Panc1 (cell line): ENCODE measurements at regions of chr15 and their contacts with region 1.

Region 1: GRCh38 chr15:78369161-78369560 is 29.0 kb downstream of the CRABP1 start:
- DNase-seq: no peak
- ATAC-seq: no peak
- H3K4me3 ChIP-seq: no peak overlapping the region
- H3K27ac ChIP-seq: no peak overlapping the region
- H3K4me1 ChIP-seq: no peaks in the 10 kb centered on the region
- H3K27me3 ChIP-seq: peaks cover 2% of the 10 kb centered on the region; the same call in 1 of the 2 replicates
- CTCF ChIP-seq: no peak

Region 2: DNA sequence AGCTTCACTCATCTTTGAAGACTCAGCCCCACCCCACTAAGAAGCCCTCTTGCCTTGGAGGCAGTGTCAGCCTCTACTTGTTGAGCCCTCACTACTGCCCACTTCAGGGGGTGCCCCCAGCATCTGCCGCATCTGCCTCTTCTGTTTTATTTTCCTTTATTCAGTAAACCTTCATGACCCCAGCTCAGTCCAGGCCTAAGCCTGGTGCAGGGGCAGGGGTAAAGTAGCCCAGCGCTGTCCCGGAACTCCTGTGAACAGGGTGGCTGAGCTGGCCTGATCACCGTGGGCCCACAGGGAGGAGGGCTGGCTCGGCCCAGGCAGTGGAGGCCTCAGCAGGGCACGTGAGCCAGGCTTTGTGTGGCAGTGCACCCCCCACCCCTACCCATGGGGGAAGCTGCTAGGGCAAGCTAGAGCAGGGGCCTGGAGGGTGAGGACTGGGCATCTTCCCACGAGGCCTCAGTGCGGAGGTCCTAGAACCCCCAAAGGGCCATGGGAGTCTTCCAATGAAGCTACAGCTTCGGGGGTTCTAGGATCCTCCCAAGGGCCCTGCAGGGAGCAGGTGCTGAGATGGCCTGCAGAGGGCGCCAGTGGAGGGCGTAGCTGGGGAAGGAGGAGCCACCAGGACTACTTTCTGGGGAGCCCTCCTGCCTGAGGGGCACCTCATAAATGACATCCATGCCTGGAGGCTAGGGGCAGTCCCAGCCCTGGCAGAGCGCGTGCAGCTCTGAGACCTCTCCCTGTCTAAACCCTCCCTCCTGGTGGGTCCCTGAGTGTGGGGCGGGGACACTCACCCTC is 1334.3 kb before region 1 on chr15:
- CTCF ChIA-PET with region 1: no interaction called
- POLR2A ChIA-PET with region 1: no interaction called
- in situ Hi-C with region 1: no loop called
- intact Hi-C with region 1: no loop called
- DNase-seq: no peak
- ATAC-seq: no peak
- H3K4me3 ChIP-seq: no peak overlapping the region
- H3K27ac ChIP-seq: no peak overlapping the region
- H3K4me1 ChIP-seq: no peaks in the 10 kb centered on the region; the same call in 1 of the 2 replicates
- H3K27me3 ChIP-seq: no peaks in the 10 kb centered on the region
- CTCF ChIP-seq: peak; percentile 83

Region 3: GRCh38 chr15:77738441-77739302 is 630.5 kb before region 1 on chr15:
- CTCF ChIA-PET with region 1: no interaction called
- POLR2A ChIA-PET with region 1: no interaction called
- in situ Hi-C with region 1: no loop called
- intact Hi-C with region 1: no loop called
- DNase-seq: no peak
- ATAC-seq: no peak
- H3K4me3 ChIP-seq: no peak overlapping the region
- H3K27ac ChIP-seq: no peak overlapping the region
- H3K4me1 ChIP-seq: no peaks in the 10 kb centered on the region
- H3K27me3 ChIP-seq: no peaks in the 10 kb centered on the region; the same call in 1 of the 2 replicates
- CTCF ChIP-seq: no peak

Region 4: GRCh38 chr15:78131295-78132061 is 237.7 kb before region 1 on chr15 and contains the start of gene CIB2:
- CTCF ChIA-PET with region 1: interaction called, 11 read pairs
- POLR2A ChIA-PET with region 1: no interaction called
- in situ Hi-C with region 1: no loop called
- intact Hi-C with region 1: no loop called
- DNase-seq: no peak
- ATAC-seq: peak; percentile 93
- H3K4me3 ChIP-seq: peak within 1 kb of the TSS; percentile 68 to 78
- H3K27ac ChIP-seq: peak within 1 kb of the TSS; percentile 90
- H3K4me1 ChIP-seq: peaks cover 3% of the 10 kb centered on the region; the same call in 1 of the 2 replicates
- H3K27me3 ChIP-seq: no peaks in the 10 kb centered on the region
- CTCF ChIP-seq: peak; percentile 96
- total RNA-seq, gene CIB2: 37.3 TPM

Region 5: DNA sequence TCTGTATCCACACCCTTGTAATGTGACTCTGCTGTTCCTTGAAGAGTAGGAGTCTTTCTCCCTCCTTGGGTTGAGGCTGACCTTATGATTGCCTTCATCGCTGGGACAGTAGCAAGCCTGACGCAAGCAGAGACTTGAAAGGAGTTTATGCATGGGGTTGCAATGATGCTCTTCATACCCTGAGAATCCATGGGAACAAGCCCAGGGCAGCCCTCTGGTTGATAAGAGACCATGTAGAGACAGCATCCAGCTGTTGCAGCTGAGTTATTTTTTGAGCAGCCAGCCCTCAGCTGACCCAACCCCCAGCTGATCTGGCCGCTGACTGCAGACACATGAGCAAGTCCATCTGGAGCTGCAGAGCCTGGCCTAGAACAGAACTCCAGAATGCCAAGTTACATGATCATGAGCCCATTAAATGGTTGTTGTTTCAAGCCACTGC is 1974.4 kb after region 1 on chr15:
- CTCF ChIA-PET with region 1: no interaction called
- POLR2A ChIA-PET with region 1: no interaction called
- in situ Hi-C with region 1: no loop called
- intact Hi-C with region 1: no loop called
- DNase-seq: no peak
- ATAC-seq: no peak
- H3K4me3 ChIP-seq: no peak overlapping the region
- H3K27ac ChIP-seq: no peak overlapping the region
- H3K4me1 ChIP-seq: no peaks in the 10 kb centered on the region
- H3K27me3 ChIP-seq: peaks cover 35% of the 10 kb centered on the region
- CTCF ChIP-seq: no peak